Posterior cingulate gyrus (tissue), 11 donors: ENCODE measurements at regions of chr1 and their contacts with region 1.

Region 1: DNA sequence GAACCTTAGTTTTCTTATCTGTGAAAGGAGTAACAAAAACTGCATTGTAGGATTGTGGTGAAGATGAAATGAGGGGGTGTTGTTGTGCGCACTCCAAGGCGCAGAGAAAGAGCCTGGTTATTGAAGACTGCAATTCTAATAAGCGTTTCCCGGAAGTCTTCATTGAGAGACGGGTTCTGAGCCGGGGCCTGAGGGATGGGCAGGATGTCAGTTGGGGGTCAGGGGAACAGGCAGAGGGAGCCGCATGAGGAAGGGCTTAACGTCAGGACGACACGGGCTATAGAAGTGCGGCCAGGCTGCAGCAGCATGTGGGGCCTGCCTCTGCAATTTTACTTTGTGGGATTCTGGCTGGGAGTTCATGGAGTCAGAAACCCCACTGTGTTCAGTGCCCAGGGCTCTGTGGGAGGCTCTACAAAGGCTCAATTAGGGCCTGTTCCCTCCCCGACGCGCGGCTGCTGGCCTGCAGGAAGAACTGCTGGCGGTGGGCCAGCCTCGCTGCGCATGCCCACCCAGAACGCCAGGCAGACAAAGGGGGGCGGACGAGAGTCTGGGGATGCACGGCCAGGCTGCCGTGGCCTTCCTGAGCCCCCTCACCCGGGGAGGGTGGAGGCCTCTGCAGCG is 20.7 kb downstream of the TRIM62 start:
- DNase-seq: peak; percentile 71 to 98 (median 81)

Region 2: GRCh38 chr1:33127001-33127791 is 34.0 kb before region 1 on chr1:
- intact Hi-C with region 1: loop called (anchors 2 kb)
- DNase-seq: peak; percentile 94 to 99 (median 96)